HCT116 (cell line): ENCODE measurements at regions of chr1 and their contacts with region 1.

Region 1: GRCh38 chr1:40153073-40153770 is 8.0 kb upstream of the RLF start:
- DNase-seq: peak; percentile 62
- ATAC-seq: peak; percentile 92
- H3K4me3 ChIP-seq: peak overlapping the region in 1 of 2 experiments; percentile 33; a peak in 2 of 4 replicates
- H3K27ac ChIP-seq: no peak overlapping the region
- H3K4me1 ChIP-seq: peaks cover 0 to 6% of the 10 kb centered on the region in 2 experiments; a peak in 1 of 4 replicates
- H3K27me3 ChIP-seq: no peaks in the 10 kb centered on the region
- CTCF ChIP-seq: peak; percentile 71 to 79 (median 76)
- POLR2A ChIP-seq: no peak
- RAD21 ChIP-seq: peak; percentile 83

Region 2: GRCh38 chr1:40020447-40021085 is 132.7 kb before region 1 on chr1:
- CTCF ChIA-PET with region 1: no interaction called
- POLR2A ChIA-PET with region 1: no interaction called
- RAD21 ChIA-PET with region 1: no interaction called
- intact Hi-C with region 1: no loop called
- DNase-seq: no peak
- ATAC-seq: no peak
- H3K4me3 ChIP-seq: no peak overlapping the region
- H3K27ac ChIP-seq: no peak overlapping the region
- H3K4me1 ChIP-seq: no peaks in the 10 kb centered on the region
- H3K27me3 ChIP-seq: no peaks in the 10 kb centered on the region
- CTCF ChIP-seq: no peak
- POLR2A ChIP-seq: no peak
- RAD21 ChIP-seq: no peak

Region 3: GRCh38 chr1:40133839-40134238 is 19.4 kb before region 1 on chr1:
- CTCF ChIA-PET with region 1: no interaction called
- POLR2A ChIA-PET with region 1: no interaction called
- RAD21 ChIA-PET with region 1: no interaction called
- intact Hi-C with region 1: no loop called
- DNase-seq: no peak
- ATAC-seq: no peak
- H3K4me3 ChIP-seq: no peak overlapping the region
- H3K27ac ChIP-seq: no peak overlapping the region
- H3K4me1 ChIP-seq: no peaks in the 10 kb centered on the region
- H3K27me3 ChIP-seq: no peaks in the 10 kb centered on the region
- CTCF ChIP-seq: no peak
- POLR2A ChIP-seq: no peak
- RAD21 ChIP-seq: peak; percentile 10; the same call in 1 of the 2 replicates

Region 4: GRCh38 chr1:40315239-40315794 is 162.1 kb after region 1 on chr1:
- CTCF ChIA-PET with region 1: interaction called, 16 read pairs
- POLR2A ChIA-PET with region 1: no interaction called
- RAD21 ChIA-PET with region 1: interaction called in 1 of 2 experiments, 3 read pairs
- intact Hi-C with region 1: loop called (anchors 5 kb)
- DNase-seq: peak; percentile 73
- ATAC-seq: peak; percentile 75
- H3K4me3 ChIP-seq: peak overlapping the region; percentile 47 to 54
- H3K27ac ChIP-seq: peak overlapping the region; percentile 35; the same call in 1 of the 2 replicates
- H3K4me1 ChIP-seq: peaks cover 6 to 36% of the 10 kb centered on the region in 2 experiments; a peak in 3 of 4 replicates
- H3K27me3 ChIP-seq: no peaks in the 10 kb centered on the region
- CTCF ChIP-seq: peak; percentile 68 to 93 (median 80); a peak in 5 of 6 replicates
- POLR2A ChIP-seq: no peak
- RAD21 ChIP-seq: peak; percentile 75

Region 5: DNA sequence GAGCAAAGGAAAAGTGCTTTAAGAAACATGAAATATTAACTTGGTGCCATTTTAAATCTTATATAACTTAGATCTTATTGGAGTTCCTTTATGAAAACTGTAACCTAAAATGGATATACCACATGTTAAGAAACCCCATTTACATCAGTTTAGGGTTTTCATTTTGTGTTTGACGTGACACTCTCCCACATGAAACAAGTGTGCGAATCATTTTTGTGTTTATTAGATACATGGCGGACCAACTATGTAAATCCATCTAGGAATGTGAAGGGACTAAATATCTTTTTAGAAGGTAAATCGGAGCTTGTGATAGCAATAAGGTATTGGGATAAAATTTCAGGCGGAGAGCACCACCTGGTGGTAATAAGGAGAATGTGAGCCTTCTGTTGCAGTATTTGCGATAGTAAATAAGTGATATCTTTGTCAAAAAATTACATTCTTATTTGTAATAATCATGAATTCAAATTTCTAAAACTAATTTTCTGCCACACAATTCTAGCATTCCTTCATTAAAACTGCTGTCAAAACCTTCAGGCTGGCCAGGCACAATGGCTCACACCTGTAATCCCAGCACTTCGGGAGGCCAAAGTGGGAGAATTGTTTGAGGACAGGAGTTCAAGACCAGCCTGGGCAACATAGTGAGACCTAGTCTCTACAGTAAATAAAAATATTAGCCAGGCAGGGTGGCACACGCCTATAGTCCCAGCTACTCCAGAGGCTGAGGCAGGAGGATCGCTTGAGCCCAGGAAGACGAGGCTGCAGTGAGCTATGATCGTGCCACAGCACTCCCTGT is 251.6 kb after region 1 on chr1:
- CTCF ChIA-PET with region 1: interaction called, 18 read pairs
- POLR2A ChIA-PET with region 1: no interaction called
- RAD21 ChIA-PET with region 1: no interaction called
- intact Hi-C with region 1: no loop called
- DNase-seq: peak; percentile 51
- ATAC-seq: peak; percentile 79
- H3K4me3 ChIP-seq: no peak overlapping the region
- H3K27ac ChIP-seq: no peak overlapping the region
- H3K4me1 ChIP-seq: no peaks in the 10 kb centered on the region
- H3K27me3 ChIP-seq: no peaks in the 10 kb centered on the region
- CTCF ChIP-seq: peak; percentile 72 to 86 (median 79)
- POLR2A ChIP-seq: no peak
- RAD21 ChIP-seq: peak; percentile 85